ENCODE measurements at regions of chr13 and their contacts with region 1.

Region 1: GRCh38 chr13:79812070-79812850 is 331.3 kb downstream of the NDFIP2 start:
- DNase-seq: peak; percentile 39
- ATAC-seq: peak; percentile 90
- H3K4me3 ChIP-seq: no peak overlapping the region
- H3K27ac ChIP-seq: peak overlapping the region; percentile 44
- H3K4me1 ChIP-seq: peaks cover 4% of the 10 kb centered on the region
- H3K27me3 ChIP-seq: no peaks in the 10 kb centered on the region
- CTCF ChIP-seq: no peak
- EP300 ChIP-seq: peak in 1 of 2 experiments; percentile 79; a peak in 2 of 4 replicates
- POLR2A ChIP-seq: no peak
- RAD21 ChIP-seq: no peak

Region 2: GRCh38 chr13:79904581-79904980 is 92.3 kb after region 1 on chr13:
- CTCF ChIA-PET with region 1: no interaction called
- POLR2A ChIA-PET with region 1: no interaction called
- RAD21 ChIA-PET with region 1: no interaction called
- SMC1A ChIA-PET with region 1: no interaction called
- in situ Hi-C with region 1: no loop called
- intact Hi-C with region 1: no loop called
- DNase-seq: no peak
- ATAC-seq: no peak
- H3K4me3 ChIP-seq: no peak overlapping the region
- H3K27ac ChIP-seq: no peak overlapping the region
- H3K4me1 ChIP-seq: no peaks in the 10 kb centered on the region
- H3K27me3 ChIP-seq: no peaks in the 10 kb centered on the region
- CTCF ChIP-seq: no peak
- EP300 ChIP-seq: no peak
- POLR2A ChIP-seq: no peak
- RAD21 ChIP-seq: no peak

Region 3: GRCh38 chr13:79918620-79919019 is 106.4 kb after region 1 on chr13:
- CTCF ChIA-PET with region 1: interaction called, 3 read pairs
- POLR2A ChIA-PET with region 1: no interaction called
- RAD21 ChIA-PET with region 1: interaction called, 4 read pairs
- SMC1A ChIA-PET with region 1: interaction called, 10 read pairs
- in situ Hi-C with region 1: no loop called
- intact Hi-C with region 1: no loop called
- DNase-seq: no peak
- ATAC-seq: peak; percentile 69
- H3K4me3 ChIP-seq: no peak overlapping the region
- H3K27ac ChIP-seq: no peak overlapping the region
- H3K4me1 ChIP-seq: no peaks in the 10 kb centered on the region
- H3K27me3 ChIP-seq: no peaks in the 10 kb centered on the region
- CTCF ChIP-seq: no peak
- EP300 ChIP-seq: no peak
- POLR2A ChIP-seq: no peak
- RAD21 ChIP-seq: no peak

Region 4: DNA sequence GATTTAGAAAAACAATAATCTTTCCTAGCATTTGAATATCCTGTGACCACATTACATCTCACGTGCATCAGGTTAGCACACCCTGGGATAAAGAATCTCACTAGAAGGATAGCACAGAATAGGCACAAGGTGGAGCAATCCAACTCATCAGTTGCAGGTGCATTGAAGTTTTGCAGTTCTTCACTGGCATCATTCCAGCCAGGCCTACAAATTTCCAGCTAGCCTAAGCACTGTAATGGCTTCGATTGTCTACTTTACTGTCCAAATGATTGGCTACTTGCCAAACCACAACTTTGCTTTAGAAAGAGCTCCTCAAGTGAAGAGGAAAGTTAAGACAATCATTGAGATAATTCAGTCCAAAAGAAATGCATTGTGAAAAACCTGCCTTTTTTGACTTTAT is 439.1 kb after region 1 on chr13:
- CTCF ChIA-PET with region 1: no interaction called
- POLR2A ChIA-PET with region 1: no interaction called
- RAD21 ChIA-PET with region 1: no interaction called
- SMC1A ChIA-PET with region 1: interaction called, 4 read pairs
- in situ Hi-C with region 1: no loop called
- intact Hi-C with region 1: loop called (anchors 10 kb)
- DNase-seq: no peak
- ATAC-seq: peak; percentile 44
- H3K4me3 ChIP-seq: no peak overlapping the region
- H3K27ac ChIP-seq: no peak overlapping the region
- H3K4me1 ChIP-seq: no peaks in the 10 kb centered on the region
- H3K27me3 ChIP-seq: no peaks in the 10 kb centered on the region
- CTCF ChIP-seq: no peak; a peak in 1 of 6 replicates
- EP300 ChIP-seq: no peak
- POLR2A ChIP-seq: no peak
- RAD21 ChIP-seq: peak; percentile 6; the same call in 1 of the 2 replicates

Region 5: DNA sequence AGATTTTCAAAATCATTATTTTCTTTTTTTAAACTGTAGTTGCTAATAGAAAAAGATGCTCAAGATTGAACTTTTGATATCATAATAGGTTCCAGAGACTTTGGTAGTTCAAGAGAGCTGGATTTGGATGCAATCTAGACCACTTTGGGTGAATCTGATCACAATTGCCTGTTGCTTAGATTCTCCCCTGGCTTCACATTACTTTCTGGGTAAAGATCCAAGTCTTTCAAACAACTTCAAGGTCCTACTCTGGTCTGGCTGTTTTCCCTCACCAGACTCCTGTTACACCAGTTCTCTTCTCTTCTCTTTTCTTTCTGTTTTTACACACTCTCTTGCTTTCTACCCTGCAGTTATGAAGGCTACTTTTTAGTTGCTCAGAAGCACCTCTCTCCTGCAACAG is 536.1 kb after region 1 on chr13:
- CTCF ChIA-PET with region 1: interaction called, 4 read pairs
- POLR2A ChIA-PET with region 1: interaction called, 3 read pairs
- RAD21 ChIA-PET with region 1: interaction called, 12 read pairs
- SMC1A ChIA-PET with region 1: interaction called, 7 read pairs
- in situ Hi-C with region 1: no loop called
- intact Hi-C with region 1: no loop called
- DNase-seq: no peak
- ATAC-seq: no peak; the same call in 2 of the 3 replicates
- H3K4me3 ChIP-seq: no peak overlapping the region
- H3K27ac ChIP-seq: no peak overlapping the region
- H3K4me1 ChIP-seq: no peaks in the 10 kb centered on the region
- H3K27me3 ChIP-seq: no peaks in the 10 kb centered on the region
- CTCF ChIP-seq: no peak
- EP300 ChIP-seq: no peak
- POLR2A ChIP-seq: no peak
- RAD21 ChIP-seq: no peak

Measured in GM12878 (cell line).